Colonic mucosa (tissue), 4 donors: ENCODE measurements at regions of chr4 and their contacts with region 1.

Region 1: DNA sequence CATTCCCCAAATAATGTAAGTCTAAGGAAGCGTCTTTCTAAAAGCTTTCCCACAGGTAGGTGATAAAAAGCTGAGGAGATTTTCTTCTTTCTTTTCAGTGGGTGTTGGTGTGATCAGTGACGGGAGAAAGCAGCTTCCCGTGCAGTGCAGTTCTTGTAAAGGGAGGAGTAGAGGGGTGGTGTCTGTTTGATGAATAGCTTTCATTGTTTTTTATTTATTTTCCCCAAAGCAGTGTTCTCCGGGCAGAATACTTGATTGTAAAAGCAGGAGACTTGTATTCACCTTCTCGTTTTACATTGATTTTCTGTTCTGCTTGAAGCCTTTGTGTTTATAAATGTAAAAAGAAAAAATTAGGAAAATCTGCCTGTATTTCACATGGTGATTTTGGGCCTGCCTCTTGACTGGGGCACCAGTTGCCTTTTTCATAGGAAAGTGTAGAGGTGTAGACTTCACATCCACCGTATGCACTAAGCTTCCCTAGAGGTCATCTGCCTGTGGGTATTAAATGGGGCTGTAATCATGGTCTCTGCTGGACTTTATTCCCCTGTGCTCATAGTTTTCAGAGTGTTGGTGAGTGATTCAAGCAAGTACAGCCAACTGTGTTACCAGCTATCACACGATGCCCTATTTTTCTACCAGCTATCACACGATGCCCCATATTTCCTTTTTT is 526.4 kb downstream of the TRIML1 start:
- DNase-seq: no peak
- H3K4me3 ChIP-seq: no peak overlapping the region
- H3K27ac ChIP-seq: no peak overlapping the region
- H3K4me1 ChIP-seq: no peaks in the 10 kb centered on the region
- H3K27me3 ChIP-seq: no peaks in the 10 kb centered on the region
- CTCF ChIP-seq: no peak

Region 2: DNA sequence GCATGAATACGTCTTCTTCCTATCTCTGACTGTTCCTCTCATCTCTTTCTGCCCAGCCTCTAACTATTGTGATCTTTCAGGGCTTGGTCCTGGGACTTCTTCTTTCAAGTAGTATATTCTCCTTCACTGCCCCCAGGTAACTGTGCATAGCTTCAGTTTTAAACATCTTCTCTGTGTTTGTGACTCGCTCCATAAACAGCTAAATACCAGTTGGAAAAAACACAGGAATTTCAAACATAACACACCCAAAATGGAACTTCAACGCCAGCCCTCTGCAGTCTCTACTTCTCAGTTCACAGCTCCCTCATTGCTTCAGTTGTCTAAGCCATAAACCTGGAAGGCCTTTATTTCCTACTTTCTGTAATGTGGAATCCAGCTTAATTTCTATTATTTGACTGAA is 572.8 kb before region 1 on chr4:
- intact Hi-C with region 1: loop called (anchors 5 kb)
- DNase-seq: no peak
- H3K4me3 ChIP-seq: no peak overlapping the region
- H3K27ac ChIP-seq: no peak overlapping the region
- H3K4me1 ChIP-seq: no peaks in the 10 kb centered on the region
- H3K27me3 ChIP-seq: no peaks in the 10 kb centered on the region
- CTCF ChIP-seq: no peak